Left ventricle myocardium superior (tissue), 1 donor: ENCODE measurements at regions of chr3 and their contacts with region 1.

Region 1: DNA sequence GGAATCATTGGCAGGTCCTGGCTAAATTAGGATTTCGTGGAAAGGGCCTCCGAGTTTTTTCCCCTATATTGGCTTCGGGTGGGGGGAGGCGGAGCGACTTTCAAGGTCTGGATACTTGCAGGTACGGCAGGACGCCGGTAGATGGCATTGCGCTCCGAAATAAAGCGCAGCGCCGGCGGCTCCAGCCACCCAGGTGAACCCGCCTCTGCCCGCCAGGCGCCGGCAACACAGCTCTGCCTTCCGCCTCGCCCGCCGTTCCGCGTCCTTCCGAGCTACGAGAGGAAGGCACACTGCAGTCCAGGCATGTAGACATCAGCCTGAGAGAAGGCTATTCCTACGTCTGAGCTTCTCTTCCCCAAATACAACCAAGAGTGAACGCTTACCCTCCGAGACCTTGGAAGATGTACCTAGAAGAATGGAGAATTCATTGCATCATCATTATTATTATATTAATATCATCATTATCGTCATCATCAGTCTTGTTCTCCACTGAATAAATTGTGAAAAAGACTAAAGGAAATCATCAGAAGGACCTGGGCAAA is 514.1 kb downstream of the MECOM start:
- DNase-seq: peak; percentile 89
- ATAC-seq: peak; percentile 86

Region 2: GRCh38 chr3:169091216-169091823 is 58.1 kb before region 1 on chr3:
- intact Hi-C with region 1: no loop called
- DNase-seq: no peak
- ATAC-seq: peak; percentile 36

Region 3: GRCh38 chr3:169668957-169669681 is 519.7 kb after region 1 on chr3:
- intact Hi-C with region 1: loop called (anchors 5 kb)
- DNase-seq: peak; percentile 89
- ATAC-seq: peak; percentile 99